Natural killer cell (primary cell): ENCODE measurements at regions of chr12 and their contacts with region 1.

Region 1: GRCh38 chr12:64256166-64256800 is 34.2 kb upstream of the KICS2 start:
- DNase-seq: peak in 1 of 2 donors; percentile 75
- ATAC-seq: peak; percentile 34 to 68 (median 50)
- H3K4me3 ChIP-seq: no peak overlapping the region
- H3K4me3 Mint-ChIP-seq: no peak overlapping the region
- H3K27ac ChIP-seq: no peak overlapping the region
- H3K27ac Mint-ChIP-seq: no peak overlapping the region
- H3K4me1 ChIP-seq: no peaks in the 10 kb centered on the region
- H3K4me1 Mint-ChIP-seq: peaks cover 12 to 14% of the 10 kb centered on the region in 2 donors
- H3K27me3 ChIP-seq: no peaks in the 10 kb centered on the region
- H3K27me3 Mint-ChIP-seq: peaks cover 0 to 4% of the 10 kb centered on the region in 2 donors
- CTCF ChIP-seq: peak; percentile 73

Region 2: DNA sequence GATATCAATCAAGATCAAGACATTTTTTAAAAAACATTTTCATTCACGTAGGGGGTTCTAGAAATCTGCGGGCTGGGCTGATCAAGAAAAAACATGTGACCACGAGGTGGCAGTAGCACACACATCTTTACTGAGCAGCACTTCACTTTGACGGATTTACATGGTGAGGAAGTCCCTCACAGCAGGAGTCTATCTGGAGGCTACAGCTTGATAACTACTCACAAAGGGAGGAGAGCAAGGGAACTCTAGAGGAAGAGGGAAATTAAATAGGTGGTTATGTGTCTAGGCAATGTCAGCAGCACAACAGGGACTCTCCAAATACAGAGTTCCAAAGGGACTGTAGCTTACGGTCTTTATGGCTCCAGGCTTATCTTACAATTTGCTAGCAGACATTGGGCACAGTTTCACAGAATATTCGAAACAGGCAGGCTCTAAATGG is 836.1 kb before region 1 on chr12:
- intact Hi-C with region 1: loop called (anchors 5 kb)
- DNase-seq: peak in 1 of 2 donors; percentile 55
- ATAC-seq: no peak
- H3K4me3 ChIP-seq: no peak overlapping the region
- H3K4me3 Mint-ChIP-seq: no peak overlapping the region
- H3K27ac ChIP-seq: no peak overlapping the region
- H3K27ac Mint-ChIP-seq: no peak overlapping the region
- H3K4me1 ChIP-seq: no peaks in the 10 kb centered on the region
- H3K4me1 Mint-ChIP-seq: no peaks in the 10 kb centered on the region
- H3K27me3 ChIP-seq: no peaks in the 10 kb centered on the region
- H3K27me3 Mint-ChIP-seq: peaks cover 0 to 3% of the 10 kb centered on the region in 2 donors
- CTCF ChIP-seq: peak; percentile 14

Region 3: DNA sequence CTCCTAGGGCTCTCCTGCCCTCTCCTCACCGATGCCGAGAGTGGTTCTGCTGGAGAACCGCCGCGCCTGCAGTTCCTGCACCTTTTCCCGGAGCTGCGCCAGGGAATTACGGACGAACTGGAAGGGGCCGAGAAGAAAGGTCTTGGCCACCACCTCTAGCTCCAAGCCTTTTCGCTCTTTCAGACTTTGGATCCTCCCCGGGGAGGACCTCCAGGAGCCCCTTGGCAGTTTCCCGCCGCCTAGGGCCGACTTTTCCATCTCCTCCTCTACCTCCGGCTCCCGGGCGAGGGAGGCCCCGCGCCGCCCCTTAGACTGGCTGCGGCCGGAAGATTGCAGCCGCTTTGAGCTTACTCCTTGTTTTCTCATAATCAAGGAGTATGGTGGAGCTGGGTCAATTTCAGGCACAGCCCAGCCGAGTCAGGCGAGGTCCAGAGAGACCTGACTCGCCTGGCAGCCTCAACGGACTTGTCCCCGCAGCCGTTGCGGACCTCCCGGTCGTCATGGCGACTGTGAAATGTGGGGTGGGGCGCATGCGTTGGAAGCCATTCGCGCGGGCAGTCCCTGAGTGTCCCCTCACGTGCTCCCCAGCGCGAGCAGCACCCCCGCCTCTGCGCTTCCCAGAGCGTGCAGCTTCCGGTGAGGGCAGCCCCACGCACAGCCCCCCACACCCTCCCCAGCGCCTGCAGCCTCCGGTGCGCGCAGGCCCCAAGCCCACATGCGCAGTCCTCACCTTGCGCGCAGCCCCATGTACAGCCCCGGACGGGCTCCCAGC is 588.1 kb before region 1 on chr12 and contains the start of gene DPY19L2:
- intact Hi-C with region 1: loop called (anchors 5 kb)
- DNase-seq: peak in 1 of 2 donors; percentile 76
- ATAC-seq: peak; percentile 47 to 49 (median 48)
- H3K4me3 ChIP-seq: peak within 1 kb of the TSS; percentile 43
- H3K4me3 Mint-ChIP-seq: peak within 1 kb of the TSS; percentile 80
- H3K27ac ChIP-seq: peak within 1 kb of the TSS; percentile 29
- H3K27ac Mint-ChIP-seq: no peak within 1 kb of the TSS
- H3K4me1 ChIP-seq: peaks cover 13% of the 10 kb centered on the region
- H3K4me1 Mint-ChIP-seq: peaks cover 0 to 4% of the 10 kb centered on the region in 2 donors
- H3K27me3 ChIP-seq: peaks cover 2% of the 10 kb centered on the region
- H3K27me3 Mint-ChIP-seq: peaks cover 22% of the 10 kb centered on the region in 2 donors
- CTCF ChIP-seq: no peak
- total RNA-seq, gene DPY19L2: 1.3 TPM in 1 of 3 donors, not detected in the others

Region 4: DNA sequence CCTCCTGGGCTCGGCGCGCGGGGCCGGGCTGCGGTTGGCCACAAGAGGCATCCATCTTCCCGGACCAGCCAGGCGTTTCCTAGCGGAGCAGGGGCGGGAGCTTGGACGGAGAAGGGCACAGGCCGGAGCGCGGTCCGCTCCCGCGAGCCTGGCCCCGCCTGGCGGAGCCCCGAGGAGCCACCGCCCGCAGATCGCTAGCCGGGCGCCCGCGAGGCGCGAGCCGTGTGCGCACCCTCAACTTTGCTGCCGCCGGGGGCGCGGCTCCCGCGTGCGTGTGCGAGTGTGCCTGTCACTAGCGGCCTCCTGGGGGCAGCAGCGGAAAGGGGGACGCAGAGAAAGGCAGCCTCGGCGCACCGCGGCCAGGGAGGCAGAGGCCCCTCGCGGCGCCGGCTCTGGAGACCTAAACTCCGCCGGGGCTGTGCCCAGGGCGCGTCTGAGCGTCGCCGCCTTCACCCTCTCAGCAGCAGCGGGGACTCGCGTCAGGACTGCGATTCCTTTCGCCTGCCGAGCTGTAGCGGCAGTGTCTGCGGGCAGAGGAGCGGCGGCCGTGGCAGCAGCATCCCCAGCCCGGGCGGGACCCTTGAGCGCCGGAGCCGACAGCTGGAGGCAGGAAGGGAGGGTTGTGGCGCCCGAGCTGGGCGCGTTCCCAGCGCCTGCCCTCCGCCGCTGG is 412.4 kb before region 1 on chr12:
- intact Hi-C with region 1: loop called (anchors 1 kb)
- DNase-seq: peak; percentile 58 to 88
- ATAC-seq: peak; percentile 90 to 95 (median 94)
- H3K4me3 ChIP-seq: peak overlapping the region; percentile 46
- H3K4me3 Mint-ChIP-seq: peak overlapping the region; percentile 42
- H3K27ac ChIP-seq: no peak overlapping the region
- H3K27ac Mint-ChIP-seq: no peak overlapping the region
- H3K4me1 ChIP-seq: peaks cover 11% of the 10 kb centered on the region
- H3K4me1 Mint-ChIP-seq: peaks cover 6% of the 10 kb centered on the region in 2 donors
- H3K27me3 ChIP-seq: no peaks in the 10 kb centered on the region
- H3K27me3 Mint-ChIP-seq: peaks cover 10 to 24% of the 10 kb centered on the region in 2 donors
- CTCF ChIP-seq: peak; percentile 55

Region 5: GRCh38 chr12:64212119-64212746 is 44.0 kb before region 1 on chr12:
- intact Hi-C with region 1: no loop called
- DNase-seq: no peak
- ATAC-seq: no peak
- H3K4me3 ChIP-seq: no peak overlapping the region
- H3K4me3 Mint-ChIP-seq: no peak overlapping the region
- H3K27ac ChIP-seq: no peak overlapping the region
- H3K27ac Mint-ChIP-seq: no peak overlapping the region
- H3K4me1 ChIP-seq: no peaks in the 10 kb centered on the region
- H3K4me1 Mint-ChIP-seq: no peaks in the 10 kb centered on the region
- H3K27me3 ChIP-seq: no peaks in the 10 kb centered on the region
- H3K27me3 Mint-ChIP-seq: no peaks in the 10 kb centered on the region
- CTCF ChIP-seq: no peak